Sigmoid colon (tissue), 7 donors: ENCODE measurements at regions of chr10 and their contacts with region 1.

Region 1: DNA sequence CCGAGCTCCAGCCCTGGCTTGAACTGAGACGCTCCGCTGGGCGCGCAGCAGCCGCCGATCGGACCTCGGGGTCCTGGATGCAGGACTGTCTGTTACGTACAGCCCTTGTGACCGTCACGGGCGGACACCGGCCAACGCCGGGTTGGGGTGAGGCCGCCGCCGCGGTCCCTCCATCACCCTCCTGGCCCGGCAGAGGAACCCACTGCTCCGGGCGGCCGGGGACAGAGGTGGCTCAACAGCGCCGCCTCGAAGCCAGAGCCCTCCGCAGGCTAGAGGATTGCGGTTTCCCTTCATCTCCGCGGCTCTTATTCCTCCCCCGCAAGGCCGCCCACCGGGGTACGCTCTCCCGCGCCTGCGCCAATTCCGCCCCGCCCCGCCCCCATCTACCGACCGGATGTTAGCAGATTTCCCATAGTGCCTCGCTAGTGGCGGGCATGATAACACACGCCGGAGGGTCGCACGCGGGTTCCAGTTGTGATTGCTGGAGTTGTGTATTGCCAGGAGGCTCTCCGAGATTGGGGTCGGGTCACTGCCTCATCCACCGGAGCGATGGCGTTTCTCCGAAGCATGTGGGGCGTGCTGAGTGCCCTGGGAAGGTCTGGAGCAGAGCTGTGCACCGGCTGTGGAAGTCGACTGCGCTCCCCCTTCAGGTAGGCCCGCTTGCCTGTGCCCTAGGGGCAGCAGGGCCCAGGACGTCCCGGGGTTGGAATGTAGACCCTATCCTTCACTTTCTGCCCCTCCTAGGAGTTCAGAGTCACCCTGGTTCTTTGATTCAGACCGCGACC is at the start of gene TFAM:
- DNase-seq: peak; percentile 98
- H3K4me3 ChIP-seq: peak within 1 kb of the TSS; percentile 63 to 90 (median 75)
- H3K27ac ChIP-seq: peak within 1 kb of the TSS; percentile 89 to 92 (median 92)
- H3K4me1 ChIP-seq: peaks cover 0 to 23% (median 16%) of the 10 kb centered on the region in 4 donors
- H3K27me3 ChIP-seq: no peaks in the 10 kb centered on the region
- CTCF ChIP-seq: peak in 2 of 4 experiments; percentile 20 to 46
- EP300 ChIP-seq: peak in 2 of 4 donors; percentile 55 to 61
- POLR2A ChIP-seq: peak; percentile 87
- total RNA-seq, gene TFAM: 10.8 to 27.1 (median 20.1) TPM

Region 2: GRCh38 chr10:58137813-58138212 is 247.4 kb before region 1 on chr10:
- intact Hi-C with region 1: no loop called
- DNase-seq: no peak
- H3K4me3 ChIP-seq: no peak overlapping the region
- H3K27ac ChIP-seq: no peak overlapping the region
- H3K4me1 ChIP-seq: no peaks in the 10 kb centered on the region
- H3K27me3 ChIP-seq: no peaks in the 10 kb centered on the region
- CTCF ChIP-seq: no peak
- EP300 ChIP-seq: no peak
- POLR2A ChIP-seq: no peak

Region 3: DNA sequence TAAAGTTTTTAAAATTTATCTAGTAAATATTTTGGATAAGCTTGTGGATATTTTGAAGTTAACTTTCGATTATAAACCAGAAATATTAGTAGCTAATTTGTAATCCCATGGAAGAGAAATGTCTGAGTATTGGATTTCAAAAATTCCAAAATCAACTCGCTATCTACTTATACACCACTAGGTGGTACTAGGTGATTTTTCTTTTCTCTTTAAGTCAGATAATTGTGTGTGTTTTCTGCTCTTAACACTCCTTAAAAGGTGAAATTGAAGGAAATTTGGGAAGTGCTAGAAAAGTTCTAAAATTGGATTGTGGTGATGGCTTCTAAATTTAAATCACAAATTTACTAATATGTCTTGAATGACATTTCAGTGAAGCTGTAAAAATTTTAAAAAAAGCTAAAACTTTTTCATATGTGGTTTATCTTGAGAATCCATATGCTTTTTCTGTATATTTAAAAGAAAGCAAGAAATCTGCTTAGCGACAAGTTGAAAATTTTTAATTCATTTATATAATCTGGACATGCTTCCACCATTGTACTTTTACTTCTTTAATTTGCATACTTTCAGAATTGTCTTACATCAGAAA is 207.7 kb before region 1 on chr10:
- intact Hi-C with region 1: loop called (anchors 5 kb)
- DNase-seq: no peak
- H3K4me3 ChIP-seq: no peak overlapping the region
- H3K27ac ChIP-seq: no peak overlapping the region
- H3K4me1 ChIP-seq: peaks cover 0 to 8% (median 0%) of the 10 kb centered on the region in 4 donors
- H3K27me3 ChIP-seq: no peaks in the 10 kb centered on the region
- CTCF ChIP-seq: peak in 3 of 4 experiments; percentile 8 to 54 (median 30)
- EP300 ChIP-seq: no peak
- POLR2A ChIP-seq: no peak

Region 4: GRCh38 chr10:58268870-58269605 is 116.2 kb before region 1 on chr10 and contains the start of gene CISD1:
- intact Hi-C with region 1: loop called (anchors 10 kb)
- DNase-seq: peak; percentile 99
- H3K4me3 ChIP-seq: peak within 1 kb of the TSS; percentile 71 to 85 (median 82)
- H3K27ac ChIP-seq: peak within 1 kb of the TSS; percentile 96 to 99 (median 98)
- H3K4me1 ChIP-seq: peaks cover 0 to 30% (median 22%) of the 10 kb centered on the region in 4 donors
- H3K27me3 ChIP-seq: no peaks in the 10 kb centered on the region
- CTCF ChIP-seq: no peak
- EP300 ChIP-seq: peak in 1 of 4 donors; percentile 57
- POLR2A ChIP-seq: peak; percentile 78 to 79
- total RNA-seq, gene CISD1: 22.1 to 34.9 (median 25.9) TPM

Region 5: GRCh38 chr10:58282615-58283014 is 102.6 kb before region 1 on chr10:
- intact Hi-C with region 1: no loop called
- DNase-seq: no peak
- H3K4me3 ChIP-seq: no peak overlapping the region
- H3K27ac ChIP-seq: no peak overlapping the region
- H3K4me1 ChIP-seq: peaks cover 0 to 20% (median 0%) of the 10 kb centered on the region in 4 donors
- H3K27me3 ChIP-seq: no peaks in the 10 kb centered on the region
- CTCF ChIP-seq: no peak
- EP300 ChIP-seq: no peak
- POLR2A ChIP-seq: no peak

Region 6: DNA sequence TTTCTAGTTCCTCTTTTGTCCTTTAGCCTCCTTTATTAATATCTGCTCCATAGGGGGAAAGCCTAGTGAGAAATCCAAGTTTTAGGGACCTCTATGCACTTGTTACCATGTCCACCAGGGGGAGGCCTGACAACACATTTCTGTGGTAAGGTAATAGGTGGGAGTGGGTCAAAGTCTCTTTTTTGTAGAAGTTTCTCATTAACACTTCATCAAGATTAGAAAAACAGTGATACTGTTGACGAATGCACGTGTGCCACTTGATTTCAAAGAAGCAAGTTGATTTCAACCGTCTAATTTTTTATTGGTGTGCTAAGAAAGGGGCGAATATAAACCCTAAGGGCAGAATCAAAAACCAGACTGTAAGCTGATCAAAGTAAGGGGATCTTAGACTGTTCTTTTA is 85.6 kb before region 1 on chr10:
- intact Hi-C with region 1: loop called (anchors 1 kb)
- DNase-seq: no peak
- H3K4me3 ChIP-seq: no peak overlapping the region
- H3K27ac ChIP-seq: no peak overlapping the region
- H3K4me1 ChIP-seq: no peaks in the 10 kb centered on the region
- H3K27me3 ChIP-seq: peaks cover 0 to 11% (median 0%) of the 10 kb centered on the region in 3 donors
- CTCF ChIP-seq: peak; percentile 37 to 75 (median 70)
- EP300 ChIP-seq: no peak
- POLR2A ChIP-seq: no peak

Region 7: GRCh38 chr10:58334817-58335305 is 50.3 kb before region 1 on chr10 and contains the start of gene UBE2D1:
- intact Hi-C with region 1: loop called (anchors 2 kb)
- DNase-seq: peak; percentile 93
- H3K4me3 ChIP-seq: peak within 1 kb of the TSS; percentile 72 to 98 (median 92)
- H3K27ac ChIP-seq: peak within 1 kb of the TSS; percentile 85 to 91 (median 86)
- H3K4me1 ChIP-seq: peaks cover 0 to 28% (median 15%) of the 10 kb centered on the region in 4 donors
- H3K27me3 ChIP-seq: no peaks in the 10 kb centered on the region
- CTCF ChIP-seq: peak in 3 of 4 experiments; percentile 25 to 31 (median 29)
- EP300 ChIP-seq: no peak
- POLR2A ChIP-seq: peak; percentile 59 to 86
- total RNA-seq, gene UBE2D1: 17.6 to 21.9 (median 20.3) TPM